ENCODE measurements at regions of chr6 and their contacts with region 1.

Region 1: GRCh38 chr6:69232911-69233448 is 563.8 kb downstream of the LMBRD1 start:
- DNase-seq: peak in 1 of 2 experiments; percentile 49
- H3K4me3 ChIP-seq: no peak overlapping the region
- H3K27ac ChIP-seq: no peak overlapping the region
- H3K4me1 ChIP-seq: no peaks in the 10 kb centered on the region
- H3K27me3 ChIP-seq: no peaks in the 10 kb centered on the region
- CTCF ChIP-seq: no peak

Region 2: GRCh38 chr6:69456086-69456485 is 223.1 kb after region 1 on chr6:
- CTCF ChIA-PET with region 1: no interaction called
- POLR2A ChIA-PET with region 1: no interaction called
- intact Hi-C with region 1: no loop called
- DNase-seq: no peak
- H3K4me3 ChIP-seq: no peak overlapping the region
- H3K27ac ChIP-seq: no peak overlapping the region
- H3K4me1 ChIP-seq: no peaks in the 10 kb centered on the region
- H3K27me3 ChIP-seq: no peaks in the 10 kb centered on the region
- CTCF ChIP-seq: no peak

Region 3: GRCh38 chr6:70905742-70906141 is 1672.8 kb after region 1 on chr6:
- CTCF ChIA-PET with region 1: no interaction called
- POLR2A ChIA-PET with region 1: no interaction called
- intact Hi-C with region 1: loop called (anchors 10 kb)
- DNase-seq: no peak
- H3K4me3 ChIP-seq: no peak overlapping the region
- H3K27ac ChIP-seq: no peak overlapping the region
- H3K4me1 ChIP-seq: no peaks in the 10 kb centered on the region
- H3K27me3 ChIP-seq: no peaks in the 10 kb centered on the region
- CTCF ChIP-seq: no peak